Mammary epithelial cell (primary cell): ENCODE measurements at regions of chr11 and their contacts with region 1.

Region 1: GRCh38 chr11:65418711-65419459 is 3.7 kb upstream of the NEAT1 start:
- DNase-seq: peak; percentile 96
- H3K4me3 ChIP-seq: peak overlapping the region in 1 of 3 experiments; percentile 17
- H3K27ac ChIP-seq: peak overlapping the region; percentile 100
- H3K4me1 ChIP-seq: peaks cover 57% of the 10 kb centered on the region
- H3K27me3 ChIP-seq: no peaks in the 10 kb centered on the region
- CTCF ChIP-seq: no peak

Region 2: GRCh38 chr11:65354265-65355012 is 64.4 kb before region 1 on chr11 and contains the start of gene TIGD3:
- CTCF ChIA-PET with region 1: no interaction called
- dilution Hi-C with region 1: loop called (anchors 5 kb)
- in situ Hi-C with region 1: no loop called
- intact Hi-C with region 1: no loop called
- DNase-seq: peak; percentile 90
- H3K4me3 ChIP-seq: peak within 1 kb of the TSS; percentile 41 to 72 (median 55)
- H3K27ac ChIP-seq: no peak within 1 kb of the TSS
- H3K4me1 ChIP-seq: peaks cover 15% of the 10 kb centered on the region
- H3K27me3 ChIP-seq: peaks cover 12% of the 10 kb centered on the region
- CTCF ChIP-seq: no peak
- total RNA-seq, gene TIGD3: not detected

Region 3: DNA sequence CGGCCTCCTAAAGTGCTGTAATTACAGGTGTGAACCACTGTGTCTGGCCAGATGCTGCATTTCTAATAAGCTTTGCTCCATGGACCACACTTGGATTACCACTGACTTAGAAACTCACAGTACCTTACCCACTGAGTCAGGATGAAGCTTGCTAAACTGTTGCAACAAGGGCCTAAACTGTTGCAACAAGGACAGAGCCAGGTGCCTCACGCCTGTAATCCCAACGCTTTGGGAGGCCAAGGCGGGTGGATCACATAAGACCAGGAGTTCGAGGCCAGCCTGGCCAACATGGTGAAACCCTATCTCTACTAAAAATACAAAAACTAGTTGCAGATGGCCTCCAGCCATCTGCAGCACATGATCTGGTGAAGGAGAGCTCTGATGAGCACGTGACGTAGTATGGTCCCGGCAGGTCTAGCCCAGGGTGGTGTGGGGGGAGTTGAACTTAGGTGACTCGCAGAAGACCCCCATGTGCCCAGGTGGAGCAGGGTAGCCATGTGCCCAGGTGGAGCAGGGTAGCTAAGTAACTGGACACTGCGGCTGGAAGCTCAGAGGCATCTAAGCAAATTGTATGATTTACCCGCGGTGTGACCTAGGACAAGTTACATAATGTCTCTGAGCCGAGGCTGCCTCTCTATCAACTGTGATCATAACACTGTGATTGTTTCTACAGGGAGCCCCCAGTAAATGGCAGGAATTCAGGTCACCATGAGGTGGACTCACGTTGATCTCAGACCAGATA is 44.9 kb before region 1 on chr11:
- CTCF ChIA-PET with region 1: no interaction called
- dilution Hi-C with region 1: loop called (anchors 5 kb)
- in situ Hi-C with region 1: no loop called
- intact Hi-C with region 1: no loop called
- DNase-seq: peak; percentile 24
- H3K4me3 ChIP-seq: no peak overlapping the region
- H3K27ac ChIP-seq: no peak overlapping the region
- H3K4me1 ChIP-seq: peaks cover 9% of the 10 kb centered on the region
- H3K27me3 ChIP-seq: no peaks in the 10 kb centered on the region
- CTCF ChIP-seq: no peak

Region 4: GRCh38 chr11:65432686-65433582 is 14.0 kb after region 1 on chr11:
- CTCF ChIA-PET with region 1: no interaction called
- dilution Hi-C with region 1: no loop called
- in situ Hi-C with region 1: no loop called
- intact Hi-C with region 1: loop called (anchors 1 kb)
- DNase-seq: peak; percentile 27
- H3K4me3 ChIP-seq: no peak overlapping the region
- H3K27ac ChIP-seq: no peak overlapping the region
- H3K4me1 ChIP-seq: peaks cover 22% of the 10 kb centered on the region
- H3K27me3 ChIP-seq: no peaks in the 10 kb centered on the region
- CTCF ChIP-seq: peak in 1 of 2 donors; percentile 6

Region 5: DNA sequence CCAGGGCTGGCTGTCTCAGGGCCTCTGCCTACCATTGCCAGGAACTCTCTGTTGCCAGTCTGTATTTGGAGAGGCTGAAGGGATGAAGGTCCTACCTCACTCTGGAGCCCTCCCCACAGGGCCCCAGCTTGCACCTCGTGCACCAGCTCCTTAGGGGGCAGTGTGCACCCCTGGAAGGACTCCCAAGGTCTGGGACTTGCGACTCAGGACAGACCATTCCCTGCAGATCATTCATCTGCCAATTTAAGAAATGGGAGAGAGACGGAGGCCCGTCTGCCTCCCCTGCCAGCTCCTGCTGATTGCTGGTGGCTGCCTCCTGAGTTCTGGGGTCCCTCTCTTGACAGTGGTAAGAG is 52.5 kb after region 1 on chr11:
- CTCF ChIA-PET with region 1: interaction called, 15 read pairs
- dilution Hi-C with region 1: no loop called
- in situ Hi-C with region 1: no loop called
- intact Hi-C with region 1: loop called (anchors 1 kb)
- DNase-seq: no peak
- H3K4me3 ChIP-seq: no peak overlapping the region
- H3K27ac ChIP-seq: peak overlapping the region; percentile 95
- H3K4me1 ChIP-seq: peaks cover 20% of the 10 kb centered on the region
- H3K27me3 ChIP-seq: no peaks in the 10 kb centered on the region
- CTCF ChIP-seq: peak; percentile 55 to 62

Region 6: DNA sequence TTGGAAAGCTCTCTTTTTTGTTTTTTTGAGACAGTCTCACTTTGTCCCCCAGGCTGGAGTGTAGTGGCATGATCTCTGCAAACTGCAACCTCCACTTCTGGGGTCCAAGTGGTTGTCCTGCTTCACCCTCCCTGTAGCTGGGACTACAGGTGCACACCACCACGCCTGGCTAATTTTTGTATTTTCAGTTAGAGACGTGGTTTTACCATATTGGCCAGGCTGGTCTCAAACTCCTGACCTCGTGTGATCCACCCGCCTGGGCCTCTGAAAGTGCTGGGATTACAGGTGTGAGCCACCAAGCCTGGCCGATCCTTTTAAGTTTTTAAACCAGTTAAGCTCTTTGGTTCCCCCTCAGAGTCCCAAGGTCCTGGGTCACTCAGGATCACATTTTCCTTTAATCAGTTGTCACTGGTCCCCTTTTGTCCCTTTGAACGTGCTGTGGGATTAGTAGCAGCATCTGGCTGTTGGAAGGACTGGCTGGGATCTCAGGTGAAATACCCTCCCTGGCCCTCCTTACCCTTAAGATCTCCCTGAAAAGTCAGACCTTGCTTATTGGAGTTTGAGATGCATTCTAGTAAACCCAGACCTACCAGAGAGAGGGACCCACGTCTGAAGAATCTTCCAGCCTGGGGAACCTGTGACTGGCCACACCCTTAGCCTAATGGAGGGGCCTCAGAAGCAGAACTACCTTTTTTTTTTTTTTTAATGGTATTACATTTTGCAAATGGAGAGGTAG is 88.1 kb after region 1 on chr11:
- CTCF ChIA-PET with region 1: interaction called, 14 read pairs
- dilution Hi-C with region 1: no loop called
- in situ Hi-C with region 1: no loop called
- intact Hi-C with region 1: loop called (anchors 1 kb)
- DNase-seq: no peak
- H3K4me3 ChIP-seq: peak overlapping the region in 1 of 3 experiments; percentile 6
- H3K27ac ChIP-seq: peak overlapping the region; percentile 81
- H3K4me1 ChIP-seq: peaks cover 17% of the 10 kb centered on the region
- H3K27me3 ChIP-seq: no peaks in the 10 kb centered on the region
- CTCF ChIP-seq: no peak

Region 7: GRCh38 chr11:66242095-66242765 is 823.3 kb after region 1 on chr11:
- CTCF ChIA-PET with region 1: no interaction called
- dilution Hi-C with region 1: no loop called
- in situ Hi-C with region 1: no loop called
- intact Hi-C with region 1: no loop called
- DNase-seq: no peak
- H3K4me3 ChIP-seq: no peak overlapping the region
- H3K27ac ChIP-seq: no peak overlapping the region
- H3K4me1 ChIP-seq: peaks cover 2% of the 10 kb centered on the region
- H3K27me3 ChIP-seq: no peaks in the 10 kb centered on the region
- CTCF ChIP-seq: no peak